Activated T-helper 2 cell treated with anti-CD3 and anti-CD28 coated beads, Interferon-gamma antibody, Interleukin-2, Interleukin-4, amounts not matched to agents 10 μg/mL and 5 μg/mL and 100 μg/mL, durations not matched to agents 14 hours and 24 hours and 36 hours (primary cell): ENCODE measurements at regions of chr6 and their contacts with region 1.

Region 1: DNA sequence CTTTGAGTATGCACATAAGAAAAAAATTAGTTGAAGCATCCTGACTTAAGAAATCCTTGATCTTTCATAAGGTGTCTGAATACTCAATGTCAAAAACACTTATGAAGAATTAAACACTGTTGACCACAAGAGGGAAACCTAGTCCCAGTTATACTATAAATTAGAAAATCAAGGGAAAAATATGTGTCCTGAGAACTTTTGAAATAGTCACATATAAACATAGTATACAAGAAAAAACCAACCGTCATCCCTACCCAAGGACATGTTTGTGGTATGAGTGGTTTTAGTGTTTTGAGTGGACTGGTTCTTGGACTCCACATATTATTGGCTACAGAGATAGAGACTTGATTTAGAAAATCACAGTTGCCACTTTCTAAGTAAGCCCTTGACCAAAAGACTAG is 7.6 kb upstream of the HLA-DRA start:
- DNase-seq: no peak
- H3K4me3 Mint-ChIP-seq: no peak overlapping the region
- H3K27ac Mint-ChIP-seq: no peak overlapping the region
- H3K4me1 Mint-ChIP-seq: no peaks in the 10 kb centered on the region
- H3K27me3 Mint-ChIP-seq: peaks cover 31% of the 10 kb centered on the region

Region 2: GRCh38 chr6:32700391-32701040 is 268.5 kb after region 1 on chr6:
- intact Hi-C with region 1: loop called (anchors 1 kb)
- DNase-seq: no peak
- H3K4me3 Mint-ChIP-seq: no peak overlapping the region
- H3K27ac Mint-ChIP-seq: no peak overlapping the region
- H3K4me1 Mint-ChIP-seq: peaks cover 4% of the 10 kb centered on the region
- H3K27me3 Mint-ChIP-seq: peaks cover 64% of the 10 kb centered on the region